PC-9 (cell line): ENCODE measurements at regions of chr4 and their contacts with region 1.

Region 1: GRCh38 chr4:38759113-38759789 is 23.5 kb downstream of the TLR10 start:
- DNase-seq: peak in 1 of 2 experiments; percentile 36
- H3K4me3 ChIP-seq: no peak overlapping the region
- H3K27ac ChIP-seq: no peak overlapping the region
- H3K4me1 ChIP-seq: no peaks in the 10 kb centered on the region
- H3K27me3 ChIP-seq: no peaks in the 10 kb centered on the region
- CTCF ChIP-seq: peak; percentile 86

Region 2: GRCh38 chr4:38290366-38290765 is 468.9 kb before region 1 on chr4:
- CTCF ChIA-PET with region 1: no interaction called
- POLR2A ChIA-PET with region 1: no interaction called
- intact Hi-C with region 1: no loop called
- DNase-seq: no peak
- H3K4me3 ChIP-seq: no peak overlapping the region
- H3K27ac ChIP-seq: no peak overlapping the region
- H3K4me1 ChIP-seq: 0 out of 2 replicates have a peak, but pooled peaks cover 9% of the 10 kb centered on the region
- H3K27me3 ChIP-seq: no peaks in the 10 kb centered on the region
- CTCF ChIP-seq: no peak

Region 3: GRCh38 chr4:38804654-38805295 is 45.5 kb after region 1 on chr4 and contains the start of gene TLR1:
- CTCF ChIA-PET with region 1: interaction called, 5 read pairs
- POLR2A ChIA-PET with region 1: no interaction called
- intact Hi-C with region 1: loop called (anchors 2 kb)
- DNase-seq: peak in 1 of 2 experiments; percentile 59
- H3K4me3 ChIP-seq: no peak within 1 kb of the TSS
- H3K27ac ChIP-seq: no peak within 1 kb of the TSS
- H3K4me1 ChIP-seq: no peaks in the 10 kb centered on the region
- H3K27me3 ChIP-seq: no peaks in the 10 kb centered on the region
- CTCF ChIP-seq: peak; percentile 71
- total RNA-seq, gene TLR1: 3.0 and 3.9 TPM in 2 replicates

Region 4: GRCh38 chr4:39134683-39135319 is 375.6 kb after region 1 on chr4:
- CTCF ChIA-PET with region 1: no interaction called
- POLR2A ChIA-PET with region 1: no interaction called
- intact Hi-C with region 1: loop called (anchors 1 kb)
- DNase-seq: no peak
- H3K4me3 ChIP-seq: no peak overlapping the region
- H3K27ac ChIP-seq: no peak overlapping the region
- H3K4me1 ChIP-seq: no peaks in the 10 kb centered on the region; the same call in 1 of the 2 replicates
- H3K27me3 ChIP-seq: no peaks in the 10 kb centered on the region
- CTCF ChIP-seq: no peak